Sigmoid colon (tissue), 7 donors: ENCODE measurements at regions of chrX and their contacts with region 1.

Region 1: GRCh38 chrX:23907498-23908218 is at the starts of genes APOO and CXorf58:
- DNase-seq: peak; percentile 95
- H3K4me3 ChIP-seq: peak within 1 kb of the TSS; percentile 50 to 65 (median 60)
- H3K27ac ChIP-seq: peak within 1 kb of the TSS; percentile 86 to 90 (median 88)
- H3K4me1 ChIP-seq: peaks cover 0 to 16% (median 0%) of the 10 kb centered on the region in 4 donors
- H3K27me3 ChIP-seq: peaks cover 0 to 6% (median 0%) of the 10 kb centered on the region in 3 donors
- CTCF ChIP-seq: peak; percentile 70 to 88 (median 74)
- EP300 ChIP-seq: peak in 1 of 4 donors; percentile 10
- POLR2A ChIP-seq: no peak
- total RNA-seq, gene APOO: 6.1 to 10.2 (median 8.3) TPM
- total RNA-seq, gene CXorf58: not detected

Region 2: DNA sequence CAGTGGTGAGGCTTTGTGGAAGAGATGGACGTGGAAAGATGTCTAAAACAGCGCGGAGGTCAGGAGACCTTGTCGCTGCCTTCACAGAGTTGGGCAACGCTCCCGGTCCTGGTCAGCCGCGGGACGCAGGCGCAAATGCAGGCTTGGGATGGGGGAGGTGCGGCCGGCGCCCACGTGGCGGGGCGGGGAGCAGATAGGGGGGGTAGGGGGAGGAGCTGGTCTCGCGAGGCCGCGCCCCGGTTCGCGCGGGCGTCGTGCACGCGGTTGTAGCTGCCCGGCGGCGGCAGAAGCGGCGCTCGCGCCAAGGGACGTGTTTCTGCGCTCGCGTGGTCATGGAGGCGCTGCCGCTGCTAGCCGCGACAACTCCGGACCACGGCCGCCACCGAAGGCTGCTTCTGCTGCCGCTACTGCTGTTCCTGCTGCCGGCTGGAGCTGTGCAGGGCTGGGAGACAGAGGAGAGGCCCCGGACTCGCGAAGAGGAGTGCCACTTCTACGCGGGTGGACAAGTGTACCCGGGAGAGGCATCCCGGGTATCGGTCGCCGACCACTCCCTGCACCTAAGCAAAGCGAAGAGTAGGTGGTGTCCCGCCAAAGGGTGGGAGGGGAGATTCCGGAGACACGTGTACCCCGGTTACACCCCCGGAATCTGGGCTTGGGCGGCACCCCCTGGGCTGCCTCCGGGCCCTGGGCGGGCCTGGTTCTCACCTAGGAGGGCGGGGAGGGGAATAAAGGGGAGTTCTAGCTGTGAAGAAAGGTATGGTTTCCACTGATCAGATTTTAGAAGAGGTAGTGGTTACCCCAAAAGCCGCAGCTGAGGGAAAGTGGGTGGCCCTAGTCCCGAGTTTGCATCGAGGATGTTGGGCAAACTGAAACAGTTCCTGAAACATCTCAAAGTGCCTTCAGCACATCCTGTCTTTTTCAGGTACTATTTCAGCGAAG is 240.2 kb before region 1 on chrX and contains the start of gene PRDX4:
- intact Hi-C with region 1: loop called (anchors 10 kb)
- DNase-seq: peak; percentile 96
- H3K4me3 ChIP-seq: peak within 1 kb of the TSS; percentile 47 to 67 (median 66)
- H3K27ac ChIP-seq: peak within 1 kb of the TSS; percentile 75 to 82 (median 80)
- H3K4me1 ChIP-seq: peaks cover 0 to 16% (median 2%) of the 10 kb centered on the region in 4 donors
- H3K27me3 ChIP-seq: no peaks in the 10 kb centered on the region
- CTCF ChIP-seq: no peak
- EP300 ChIP-seq: peak in 1 of 4 donors; percentile 55
- POLR2A ChIP-seq: peak in 1 of 2 donors; percentile 18
- total RNA-seq, gene PRDX4: 54.2 to 67.0 (median 57.2) TPM

Region 3: GRCh38 chrX:23964191-23964590 is 56.5 kb after region 1 on chrX:
- intact Hi-C with region 1: no loop called
- DNase-seq: no peak
- H3K4me3 ChIP-seq: no peak overlapping the region
- H3K27ac ChIP-seq: no peak overlapping the region
- H3K4me1 ChIP-seq: no peaks in the 10 kb centered on the region
- H3K27me3 ChIP-seq: no peaks in the 10 kb centered on the region
- CTCF ChIP-seq: no peak
- EP300 ChIP-seq: no peak
- POLR2A ChIP-seq: no peak

Region 4: GRCh38 chrX:24024819-24025740 is 117.4 kb after region 1 on chrX:
- intact Hi-C with region 1: loop called (anchors 2 kb)
- DNase-seq: peak; percentile 95
- H3K4me3 ChIP-seq: peak overlapping the region; percentile 73 to 83 (median 79)
- H3K27ac ChIP-seq: peak overlapping the region; percentile 93 to 98 (median 96)
- H3K4me1 ChIP-seq: peaks cover 0 to 10% (median 4%) of the 10 kb centered on the region in 4 donors
- H3K27me3 ChIP-seq: no peaks in the 10 kb centered on the region
- CTCF ChIP-seq: no peak
- EP300 ChIP-seq: peak in 2 of 4 donors; percentile 42 to 53
- POLR2A ChIP-seq: peak; percentile 27 to 54

Region 5: GRCh38 chrX:24054182-24055042 is 146.8 kb after region 1 on chrX and contains the start of gene EIF2S3:
- intact Hi-C with region 1: loop called (anchors 2 kb)
- DNase-seq: peak; percentile 96
- H3K4me3 ChIP-seq: peak within 1 kb of the TSS in 3 of 4 donors; percentile 67 to 81 (median 70)
- H3K27ac ChIP-seq: peak within 1 kb of the TSS in 2 of 4 donors; percentile 89 to 91
- H3K4me1 ChIP-seq: peaks cover 0 to 6% (median 0%) of the 10 kb centered on the region in 4 donors
- H3K27me3 ChIP-seq: no peaks in the 10 kb centered on the region
- CTCF ChIP-seq: peak in 3 of 4 experiments; percentile 32 to 43 (median 43)
- EP300 ChIP-seq: peak in 1 of 4 donors; percentile 65
- POLR2A ChIP-seq: peak in 1 of 2 donors; percentile 27
- total RNA-seq, gene EIF2S3: 134 to 222 (median 143) TPM